Activated CD4-positive, alpha-beta memory T cell treated with anti-CD3 and anti-CD28 coated beads for 36 hours (primary cell): ENCODE measurements at regions of chr10 and their contacts with region 1.

Region 1: GRCh38 chr10:103685880-103686669 is 169.3 kb downstream of the SH3PXD2A start:
- DNase-seq: peak; percentile 85
- H3K4me3 Mint-ChIP-seq: no peak overlapping the region
- H3K27ac Mint-ChIP-seq: no peak overlapping the region
- H3K4me1 Mint-ChIP-seq: peaks cover 5% of the 10 kb centered on the region
- H3K27me3 Mint-ChIP-seq: no peaks in the 10 kb centered on the region

Region 2: GRCh38 chr10:103576862-103577261 is 109.2 kb before region 1 on chr10:
- CTCF ChIA-PET with region 1: interaction called, 10 read pairs
- POLR2A ChIA-PET with region 1: no interaction called
- intact Hi-C with region 1: no loop called
- DNase-seq: no peak
- H3K4me3 Mint-ChIP-seq: no peak overlapping the region
- H3K27ac Mint-ChIP-seq: no peak overlapping the region
- H3K4me1 Mint-ChIP-seq: no peaks in the 10 kb centered on the region
- H3K27me3 Mint-ChIP-seq: peaks cover 5% of the 10 kb centered on the region

Region 3: GRCh38 chr10:103598654-103599115 is 87.4 kb before region 1 on chr10:
- CTCF ChIA-PET with region 1: interaction called, 77 read pairs
- POLR2A ChIA-PET with region 1: interaction called, 4 read pairs
- intact Hi-C with region 1: no loop called
- DNase-seq: peak; percentile 45
- H3K4me3 Mint-ChIP-seq: no peak overlapping the region
- H3K27ac Mint-ChIP-seq: no peak overlapping the region
- H3K4me1 Mint-ChIP-seq: no peaks in the 10 kb centered on the region
- H3K27me3 Mint-ChIP-seq: no peaks in the 10 kb centered on the region

Region 4: GRCh38 chr10:103612462-103613365 is 73.4 kb before region 1 on chr10:
- CTCF ChIA-PET with region 1: interaction called, 19 read pairs
- POLR2A ChIA-PET with region 1: no interaction called
- intact Hi-C with region 1: no loop called
- DNase-seq: no peak
- H3K4me3 Mint-ChIP-seq: no peak overlapping the region
- H3K27ac Mint-ChIP-seq: no peak overlapping the region
- H3K4me1 Mint-ChIP-seq: no peaks in the 10 kb centered on the region
- H3K27me3 Mint-ChIP-seq: no peaks in the 10 kb centered on the region

Region 5: DNA sequence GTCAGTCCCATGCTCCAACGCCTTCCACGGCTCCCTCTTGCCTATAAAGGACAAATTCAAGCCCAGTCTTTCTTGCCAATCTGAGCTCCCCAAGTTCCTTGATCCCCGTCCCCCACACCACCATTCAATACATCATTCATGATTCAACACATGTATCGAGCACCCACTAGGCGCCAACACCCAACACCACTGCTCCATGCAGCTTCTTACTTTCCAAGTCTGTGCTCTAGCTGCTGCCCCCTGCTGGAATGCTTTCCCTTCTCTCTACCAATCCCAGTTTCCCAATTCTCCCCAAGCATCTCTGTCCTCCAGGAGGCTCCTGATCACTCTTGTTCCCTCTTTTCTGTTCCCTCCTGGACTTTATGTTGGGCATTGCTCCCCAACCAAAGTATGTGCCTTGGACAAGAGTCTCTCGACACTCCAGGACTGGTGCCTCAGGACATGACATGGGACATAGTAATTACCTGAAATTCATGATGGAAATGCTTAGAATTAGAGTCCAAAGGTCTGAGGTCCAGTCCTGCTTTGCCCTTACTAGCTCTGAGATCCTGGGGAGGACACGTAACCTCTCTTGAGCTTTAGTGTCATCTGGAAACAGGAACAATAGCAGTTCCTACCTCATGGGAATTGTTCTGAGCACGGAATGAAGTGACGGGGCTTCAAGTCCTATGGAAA is 19.9 kb before region 1 on chr10:
- CTCF ChIA-PET with region 1: interaction called, 28 read pairs
- POLR2A ChIA-PET with region 1: interaction called, 4 read pairs
- intact Hi-C with region 1: no loop called
- DNase-seq: peak; percentile 25
- H3K4me3 Mint-ChIP-seq: no peak overlapping the region
- H3K27ac Mint-ChIP-seq: no peak overlapping the region
- H3K4me1 Mint-ChIP-seq: peaks cover 12% of the 10 kb centered on the region
- H3K27me3 Mint-ChIP-seq: no peaks in the 10 kb centered on the region

Region 6: GRCh38 chr10:103712570-103713498 is 26.8 kb after region 1 on chr10:
- CTCF ChIA-PET with region 1: interaction called, 11 read pairs
- POLR2A ChIA-PET with region 1: no interaction called
- intact Hi-C with region 1: no loop called
- DNase-seq: peak; percentile 89
- H3K4me3 Mint-ChIP-seq: no peak overlapping the region
- H3K27ac Mint-ChIP-seq: peak overlapping the region; percentile 4
- H3K4me1 Mint-ChIP-seq: peaks cover 2% of the 10 kb centered on the region
- H3K27me3 Mint-ChIP-seq: no peaks in the 10 kb centered on the region

Region 7: DNA sequence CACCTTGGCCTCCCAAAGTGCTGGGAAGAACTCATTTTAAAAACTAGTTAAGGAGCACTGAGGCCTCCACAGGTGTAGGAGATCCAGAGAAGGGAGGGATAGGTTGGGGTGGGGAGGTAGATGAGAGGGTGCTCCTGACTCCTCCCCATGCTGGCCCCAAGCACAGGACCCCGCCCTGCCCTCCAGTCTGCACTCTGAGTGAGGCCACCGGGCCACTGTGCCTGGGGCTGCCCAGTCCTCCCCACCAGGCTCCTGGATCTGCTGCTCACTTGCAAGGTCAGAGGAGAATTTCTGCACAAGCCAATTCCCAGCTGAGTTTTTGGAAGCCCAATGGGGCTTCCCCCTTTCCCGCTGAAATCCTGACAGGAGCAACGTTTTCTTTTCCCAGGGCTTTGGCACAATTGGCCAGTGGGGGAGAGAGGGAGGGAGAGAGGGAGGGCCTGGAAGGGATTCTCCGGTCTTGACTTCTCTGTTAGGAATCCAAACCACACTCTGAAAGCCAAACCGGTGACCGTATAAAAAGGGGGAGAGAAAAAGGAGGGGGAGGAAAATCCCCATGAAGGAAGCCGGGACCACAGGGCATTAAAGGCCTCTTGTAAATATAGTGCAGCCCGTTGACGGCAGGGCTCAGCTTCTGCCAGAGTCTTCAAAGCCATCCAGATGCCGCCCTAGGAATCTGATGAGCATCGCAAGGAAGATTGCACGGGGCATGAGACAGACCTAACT is 53.1 kb after region 1 on chr10:
- CTCF ChIA-PET with region 1: no interaction called
- POLR2A ChIA-PET with region 1: no interaction called
- intact Hi-C with region 1: no loop called
- DNase-seq: no peak
- H3K4me3 Mint-ChIP-seq: no peak overlapping the region
- H3K27ac Mint-ChIP-seq: no peak overlapping the region
- H3K4me1 Mint-ChIP-seq: peaks cover 2% of the 10 kb centered on the region
- H3K27me3 Mint-ChIP-seq: no peaks in the 10 kb centered on the region